Posterior cingulate gyrus (tissue), 11 donors: ENCODE measurements at regions of chr6 and their contacts with region 1.

Region 1: DNA sequence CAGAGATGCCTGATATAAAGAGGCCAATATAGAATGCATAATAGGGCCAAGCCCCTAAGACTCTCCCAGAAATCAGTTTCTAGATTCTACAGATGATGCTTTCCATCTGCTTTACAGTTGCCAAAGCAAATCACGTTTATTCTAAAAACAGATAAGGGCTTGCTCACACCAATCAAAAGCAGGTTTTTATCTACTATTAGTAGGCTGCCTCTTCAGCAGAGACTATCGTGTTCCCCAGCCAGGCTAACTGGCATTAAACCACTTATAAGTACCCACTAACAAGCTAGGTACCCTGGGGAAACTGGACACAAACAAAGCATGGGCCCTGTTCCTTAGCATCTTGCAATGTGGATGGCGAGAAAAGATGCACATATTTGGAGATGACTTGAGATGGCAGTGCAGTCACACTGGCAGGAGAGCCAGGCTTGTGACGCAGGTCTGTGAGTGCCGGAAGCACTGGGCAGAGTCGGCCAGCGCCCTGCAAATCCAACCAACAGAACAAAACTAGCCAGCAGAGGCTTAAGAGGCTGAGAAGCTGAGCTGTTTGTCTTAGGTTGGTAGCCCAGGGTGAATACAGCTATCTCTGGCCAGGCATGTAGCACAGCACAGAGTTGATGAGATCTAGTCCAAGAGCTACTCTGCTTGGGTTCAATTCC is 73.4 kb downstream of the GFOD1 start:
- DNase-seq: peak in 9 of 10 donors; percentile 53 to 96 (median 84)

Region 2: GRCh38 chr6:13355043-13355951 is 58.7 kb before region 1 on chr6:
- intact Hi-C with region 1: loop called (anchors 10 kb)
- DNase-seq: no peak

Region 3: GRCh38 chr6:13924146-13924948 is 510.3 kb after region 1 on chr6:
- intact Hi-C with region 1: no loop called
- DNase-seq: peak; percentile 10 to 91 (median 46)